ENCODE measurements at regions of chr1 and their contacts with region 1.

Region 1: GRCh38 chr1:1331068-1331965 is at the start of gene TAS1R3:
- DNase-seq: no peak
- H3K4me3 ChIP-seq: no peak within 1 kb of the TSS
- H3K27me3 ChIP-seq: no peaks in the 10 kb centered on the region
- CTCF ChIP-seq: no peak
- polyA plus RNA-seq, gene TAS1R3: 0.06 and 0.11 TPM in 2 replicates

Region 2: GRCh38 chr1:1349256-1350012 is 18.1 kb after region 1 on chr1 and contains the start of gene DVL1:
- CTCF ChIA-PET with region 1: interaction called, 13 read pairs
- POLR2A ChIA-PET with region 1: no interaction called
- DNase-seq: no peak
- H3K4me3 ChIP-seq: peak within 1 kb of the TSS; percentile 78
- H3K27me3 ChIP-seq: no peaks in the 10 kb centered on the region
- CTCF ChIP-seq: peak; percentile 52
- polyA plus RNA-seq, gene DVL1: 16.2 and 23.6 TPM in 2 replicates